ENCODE measurements at regions of chr5 and their contacts with region 1.

Region 1: DNA sequence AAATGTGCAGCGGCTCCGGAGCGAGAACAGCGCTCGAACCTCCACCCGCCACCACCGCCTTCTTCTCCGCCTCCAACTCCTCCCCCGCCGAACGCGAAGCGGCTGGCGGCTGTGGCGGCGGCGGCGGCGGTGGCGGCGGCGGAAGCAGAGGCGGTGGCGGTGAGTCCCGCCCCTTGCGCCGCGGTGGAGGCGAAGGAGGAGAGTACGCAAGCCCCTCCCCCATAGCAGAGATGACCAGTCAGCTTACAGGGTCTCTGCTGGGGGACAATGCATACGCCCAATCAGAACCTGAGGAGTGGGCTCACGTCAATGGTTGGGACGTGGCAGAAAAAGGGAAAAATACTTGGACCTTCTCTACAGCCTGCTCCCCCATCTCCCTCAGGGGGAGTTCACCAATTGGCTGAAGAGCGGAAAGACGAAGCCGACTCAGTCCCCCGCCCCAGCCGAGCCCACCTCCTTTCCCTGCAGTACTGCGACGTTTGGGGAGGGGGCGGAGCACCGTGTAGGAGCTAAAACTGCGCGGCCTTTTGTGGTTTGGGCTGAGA is at the start of gene PJA2:
- DNase-seq: peak; percentile 97 to 99 (median 98)
- H3K4me3 ChIP-seq: peak within 1 kb of the TSS; percentile 95 to 96
- H3K4me3 Mint-ChIP-seq: peak within 1 kb of the TSS; percentile 91 to 100 (median 99)
- H3K27ac ChIP-seq: peak within 1 kb of the TSS; percentile 97
- H3K27ac Mint-ChIP-seq: peak within 1 kb of the TSS; percentile 96 to 100 (median 99)
- H3K4me1 ChIP-seq: peaks cover 50% of the 10 kb centered on the region
- H3K4me1 Mint-ChIP-seq: peaks cover 26 to 65% (median 38%) of the 10 kb centered on the region in 4 donors
- H3K27me3 ChIP-seq: no peaks in the 10 kb centered on the region
- H3K27me3 Mint-ChIP-seq: peaks cover 0 to 3% of the 10 kb centered on the region in 2 donors
- total RNA-seq, gene PJA2: 90.0 to 90.6 TPM

Region 2: GRCh38 chr5:108727651-108728565 is 682.0 kb before region 1 on chr5:
- CTCF ChIA-PET with region 1: no interaction called
- POLR2A ChIA-PET with region 1: interaction called, 13 read pairs
- intact Hi-C with region 1: loop called (anchors 1 kb)
- DNase-seq: peak; percentile 28 to 66 (median 38)
- H3K4me3 ChIP-seq: peak overlapping the region; percentile 25 to 81
- H3K4me3 Mint-ChIP-seq: peak overlapping the region; percentile 80 to 95 (median 84)
- H3K27ac ChIP-seq: peak overlapping the region; percentile 44
- H3K27ac Mint-ChIP-seq: peak overlapping the region; percentile 75 to 95 (median 82)
- H3K4me1 ChIP-seq: peaks cover 8% of the 10 kb centered on the region
- H3K4me1 Mint-ChIP-seq: peaks cover 14 to 31% (median 23%) of the 10 kb centered on the region in 4 donors
- H3K27me3 ChIP-seq: no peaks in the 10 kb centered on the region
- H3K27me3 Mint-ChIP-seq: peaks cover 10 to 12% of the 10 kb centered on the region in 2 donors

Region 3: GRCh38 chr5:109347252-109347888 is 62.5 kb before region 1 on chr5:
- CTCF ChIA-PET with region 1: no interaction called
- POLR2A ChIA-PET with region 1: interaction called, 11 read pairs
- intact Hi-C with region 1: no loop called
- DNase-seq: no peak
- H3K4me3 ChIP-seq: no peak overlapping the region
- H3K4me3 Mint-ChIP-seq: no peak overlapping the region
- H3K27ac ChIP-seq: no peak overlapping the region
- H3K27ac Mint-ChIP-seq: peak overlapping the region in 5 of 7 donors; percentile 9 to 75 (median 47)
- H3K4me1 ChIP-seq: no peaks in the 10 kb centered on the region
- H3K4me1 Mint-ChIP-seq: peaks cover 10 to 23% (median 17%) of the 10 kb centered on the region in 4 donors
- H3K27me3 ChIP-seq: no peaks in the 10 kb centered on the region
- H3K27me3 Mint-ChIP-seq: no peaks in the 10 kb centered on the region

Region 4: DNA sequence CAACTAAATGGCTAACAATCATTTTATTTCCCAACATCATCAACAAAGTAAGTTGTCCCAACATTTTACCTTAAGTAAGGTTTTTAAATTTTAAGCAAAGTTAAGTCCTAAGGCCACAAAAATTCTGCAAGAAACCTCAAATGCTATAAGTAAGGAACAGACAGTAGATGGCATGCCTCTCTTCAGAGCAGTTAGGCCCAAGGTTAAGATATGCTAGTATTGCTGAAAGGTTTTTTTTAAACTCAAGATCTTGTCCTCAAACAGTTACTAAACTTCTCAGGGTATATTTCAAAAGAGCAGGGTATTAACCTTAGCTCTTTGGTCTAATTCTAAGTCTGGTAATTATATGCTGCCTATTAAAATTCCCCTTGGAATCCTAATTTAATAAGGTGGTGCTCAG is 35.3 kb before region 1 on chr5:
- CTCF ChIA-PET with region 1: no interaction called
- POLR2A ChIA-PET with region 1: interaction called, 9 read pairs
- intact Hi-C with region 1: loop called (anchors 2 kb)
- DNase-seq: peak in 1 of 5 donors; percentile 2
- H3K4me3 ChIP-seq: no peak overlapping the region
- H3K4me3 Mint-ChIP-seq: no peak overlapping the region
- H3K27ac ChIP-seq: no peak overlapping the region
- H3K27ac Mint-ChIP-seq: peak overlapping the region in 1 of 7 donors; percentile 13
- H3K4me1 ChIP-seq: peaks cover 15% of the 10 kb centered on the region
- H3K4me1 Mint-ChIP-seq: peaks cover 38 to 69% (median 55%) of the 10 kb centered on the region in 4 donors
- H3K27me3 ChIP-seq: no peaks in the 10 kb centered on the region
- H3K27me3 Mint-ChIP-seq: no peaks in the 10 kb centered on the region

Region 5: GRCh38 chr5:109399092-109399759 is 10.7 kb before region 1 on chr5:
- CTCF ChIA-PET with region 1: no interaction called
- POLR2A ChIA-PET with region 1: interaction called, 17 read pairs
- intact Hi-C with region 1: no loop called
- DNase-seq: no peak
- H3K4me3 ChIP-seq: no peak overlapping the region
- H3K4me3 Mint-ChIP-seq: peak overlapping the region in 7 of 8 donors; percentile 8 to 69 (median 49)
- H3K27ac ChIP-seq: no peak overlapping the region
- H3K27ac Mint-ChIP-seq: peak overlapping the region in 2 of 7 donors; percentile 3 to 71
- H3K4me1 ChIP-seq: peaks cover 79% of the 10 kb centered on the region
- H3K4me1 Mint-ChIP-seq: peaks cover 41 to 88% (median 70%) of the 10 kb centered on the region in 4 donors
- H3K27me3 ChIP-seq: no peaks in the 10 kb centered on the region
- H3K27me3 Mint-ChIP-seq: no peaks in the 10 kb centered on the region

Region 6: DNA sequence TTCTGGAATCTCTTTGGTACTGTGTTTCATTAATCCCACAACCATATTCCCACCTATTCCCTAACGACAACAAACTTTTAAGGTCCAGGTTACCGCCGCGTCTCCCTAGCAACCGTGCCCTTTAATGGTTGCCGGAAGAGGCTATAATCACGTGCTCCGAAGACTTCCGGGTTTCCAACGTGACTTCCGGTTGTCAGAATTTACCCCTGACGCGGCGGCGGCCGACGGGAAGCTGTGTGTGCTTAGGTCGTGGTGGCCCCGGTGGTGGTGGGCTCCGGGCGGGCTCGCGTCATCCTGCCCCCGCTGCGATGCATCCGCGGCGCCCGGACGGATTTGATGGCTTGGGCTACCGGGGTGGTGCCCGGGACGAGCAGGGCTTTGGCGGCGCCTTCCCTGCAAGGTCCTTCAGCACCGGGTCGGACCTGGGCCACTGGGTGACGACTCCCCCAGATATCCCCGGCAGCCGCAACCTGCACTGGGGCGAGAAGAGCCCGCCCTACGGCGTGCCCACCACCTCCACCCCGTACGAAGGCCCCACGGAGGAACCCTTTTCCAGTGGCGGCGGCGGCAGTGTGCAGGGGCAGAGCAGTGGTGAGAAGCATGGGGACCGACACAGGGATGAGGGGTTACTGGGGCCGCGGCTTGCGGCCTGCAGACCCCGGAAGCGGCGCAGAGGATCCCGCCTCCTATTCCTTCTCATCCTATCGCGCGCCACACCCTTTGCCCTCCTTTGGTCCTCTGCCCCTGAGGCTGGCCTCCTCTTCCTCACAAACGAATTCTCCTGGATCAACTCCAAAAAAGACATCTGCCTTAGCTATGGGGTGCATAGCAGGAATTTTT is 1329.1 kb after region 1 on chr5 and contains the start of gene SLC25A46:
- CTCF ChIA-PET with region 1: no interaction called
- POLR2A ChIA-PET with region 1: interaction called, 11 read pairs
- intact Hi-C with region 1: loop called (anchors 1 kb)
- DNase-seq: peak; percentile 91 to 93 (median 92)
- H3K4me3 ChIP-seq: peak within 1 kb of the TSS; percentile 74 to 86
- H3K4me3 Mint-ChIP-seq: peak within 1 kb of the TSS; percentile 94 to 99 (median 98)
- H3K27ac ChIP-seq: peak within 1 kb of the TSS; percentile 88
- H3K27ac Mint-ChIP-seq: peak within 1 kb of the TSS; percentile 96 to 100 (median 99)
- H3K4me1 ChIP-seq: peaks cover 32% of the 10 kb centered on the region
- H3K4me1 Mint-ChIP-seq: peaks cover 21 to 44% (median 31%) of the 10 kb centered on the region in 4 donors
- H3K27me3 ChIP-seq: no peaks in the 10 kb centered on the region
- H3K27me3 Mint-ChIP-seq: peaks cover 5 to 7% of the 10 kb centered on the region in 2 donors
- total RNA-seq, gene SLC25A46: 38.1 TPM